GM10248 (cell line): ENCODE measurements at regions of chr15 and their contacts with region 1.

Region 1: GRCh38 chr15:36501063-36501678 is 78.3 kb upstream of the CDIN1 start:
- DNase-seq: peak; percentile 30
- CTCF ChIP-seq: peak; percentile 76

Region 2: GRCh38 chr15:36511594-36511993 is 10.4 kb after region 1 on chr15:
- CTCF ChIA-PET with region 1: interaction called, 19 read pairs
- POLR2A ChIA-PET with region 1: no interaction called
- DNase-seq: no peak
- CTCF ChIP-seq: no peak

Region 3: DNA sequence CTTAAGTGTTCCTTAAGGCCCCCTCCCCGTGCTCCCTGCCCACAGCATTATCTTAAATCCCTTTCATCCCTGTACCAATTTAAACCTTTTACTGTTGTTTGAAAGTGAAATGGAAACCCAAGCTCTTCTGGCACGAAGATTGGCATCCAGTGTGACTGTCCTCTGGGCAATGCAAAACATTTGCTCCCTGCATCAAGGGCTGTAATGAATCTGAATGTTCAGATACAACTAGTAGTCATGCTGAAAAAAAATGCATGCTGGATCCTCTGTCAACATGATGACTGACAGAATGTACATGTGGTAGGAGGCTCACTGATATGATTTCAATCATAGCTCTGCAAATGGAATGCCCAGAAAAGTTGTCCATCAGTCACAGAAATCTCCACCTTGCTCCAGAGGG is 70.1 kb after region 1 on chr15:
- CTCF ChIA-PET with region 1: no interaction called
- POLR2A ChIA-PET with region 1: no interaction called
- DNase-seq: no peak
- CTCF ChIP-seq: no peak